Panc1 (cell line): ENCODE measurements at regions of chr18 and their contacts with region 1.

Region 1: DNA sequence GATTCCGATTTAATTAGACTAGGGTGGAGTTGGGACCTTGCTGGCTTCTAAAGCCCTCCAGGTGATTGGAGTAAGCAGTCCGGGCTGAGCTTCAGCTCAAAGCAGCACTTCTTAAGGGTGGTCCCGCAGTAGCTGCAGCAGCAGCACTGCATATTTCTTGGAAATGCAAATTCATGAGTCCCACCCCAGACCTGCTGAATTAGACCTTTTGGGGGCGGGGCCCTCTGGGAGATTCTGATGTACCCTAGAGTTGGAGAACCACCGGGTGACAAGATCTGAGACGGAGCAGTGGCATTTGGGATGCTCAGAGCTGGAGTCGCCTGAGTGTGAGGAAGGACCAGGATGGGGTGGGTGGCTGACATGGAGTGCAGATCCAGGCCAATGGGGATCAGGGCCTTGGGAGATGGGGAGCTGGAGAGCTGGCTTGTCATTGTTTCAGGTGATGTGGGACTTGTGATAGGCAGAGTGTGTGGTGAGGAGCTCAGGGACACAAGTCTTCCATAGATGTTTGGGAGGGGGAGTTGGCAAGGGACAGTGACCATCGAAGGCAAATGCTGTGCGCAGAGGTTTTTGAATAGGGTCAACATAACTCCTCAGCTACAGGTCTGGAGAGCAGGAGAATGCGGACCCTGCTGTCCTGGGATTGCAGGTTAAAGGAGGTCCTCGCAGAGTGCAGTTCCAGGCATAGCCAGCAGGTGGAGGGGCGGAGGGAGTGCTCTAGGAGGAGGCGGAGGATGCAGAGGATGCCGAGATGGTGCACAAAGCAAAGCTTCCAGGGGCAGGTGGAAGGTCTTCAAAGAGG is 130.9 kb upstream of the RAB12 start:
- DNase-seq: peak; percentile 35
- ATAC-seq: peak; percentile 85
- H3K4me3 ChIP-seq: no peak overlapping the region
- H3K27ac ChIP-seq: no peak overlapping the region
- H3K4me1 ChIP-seq: no peaks in the 10 kb centered on the region
- H3K27me3 ChIP-seq: peaks cover 15% of the 10 kb centered on the region
- CTCF ChIP-seq: peak; percentile 87

Region 2: GRCh38 chr18:8375249-8375648 is 103.1 kb before region 1 on chr18:
- CTCF ChIA-PET with region 1: no interaction called
- POLR2A ChIA-PET with region 1: no interaction called
- in situ Hi-C with region 1: no loop called
- intact Hi-C with region 1: loop called (anchors 10 kb)
- DNase-seq: no peak
- ATAC-seq: no peak
- H3K4me3 ChIP-seq: no peak overlapping the region
- H3K27ac ChIP-seq: no peak overlapping the region
- H3K4me1 ChIP-seq: no peaks in the 10 kb centered on the region
- H3K27me3 ChIP-seq: peaks cover 5% of the 10 kb centered on the region
- CTCF ChIP-seq: no peak

Region 3: DNA sequence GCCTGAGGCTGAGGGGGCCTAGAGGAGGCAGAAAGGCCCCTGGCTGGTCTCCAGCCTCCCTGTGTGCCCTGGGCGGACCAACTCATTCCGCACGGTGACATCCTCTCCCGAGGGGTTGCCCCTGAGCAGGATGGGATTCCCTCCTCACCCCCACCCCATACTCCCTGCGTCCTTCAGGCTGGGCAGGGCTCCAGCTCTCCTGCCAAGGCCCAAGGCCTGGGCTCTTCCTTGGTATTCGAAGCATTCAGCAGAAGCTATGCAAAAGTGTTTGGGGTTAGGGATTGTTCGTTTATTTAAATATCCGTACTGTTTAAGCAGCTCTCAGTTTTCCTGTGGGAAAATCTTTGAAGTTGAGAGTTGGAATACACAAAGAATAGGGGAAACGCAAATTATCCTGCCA is 17.8 kb after region 1 on chr18:
- CTCF ChIA-PET with region 1: no interaction called
- POLR2A ChIA-PET with region 1: interaction called, 15 read pairs
- in situ Hi-C with region 1: no loop called
- intact Hi-C with region 1: no loop called
- DNase-seq: no peak
- ATAC-seq: no peak
- H3K4me3 ChIP-seq: no peak overlapping the region
- H3K27ac ChIP-seq: no peak overlapping the region
- H3K4me1 ChIP-seq: no peaks in the 10 kb centered on the region
- H3K27me3 ChIP-seq: peaks cover 2% of the 10 kb centered on the region; the same call in 1 of the 2 replicates
- CTCF ChIP-seq: no peak

Region 4: DNA sequence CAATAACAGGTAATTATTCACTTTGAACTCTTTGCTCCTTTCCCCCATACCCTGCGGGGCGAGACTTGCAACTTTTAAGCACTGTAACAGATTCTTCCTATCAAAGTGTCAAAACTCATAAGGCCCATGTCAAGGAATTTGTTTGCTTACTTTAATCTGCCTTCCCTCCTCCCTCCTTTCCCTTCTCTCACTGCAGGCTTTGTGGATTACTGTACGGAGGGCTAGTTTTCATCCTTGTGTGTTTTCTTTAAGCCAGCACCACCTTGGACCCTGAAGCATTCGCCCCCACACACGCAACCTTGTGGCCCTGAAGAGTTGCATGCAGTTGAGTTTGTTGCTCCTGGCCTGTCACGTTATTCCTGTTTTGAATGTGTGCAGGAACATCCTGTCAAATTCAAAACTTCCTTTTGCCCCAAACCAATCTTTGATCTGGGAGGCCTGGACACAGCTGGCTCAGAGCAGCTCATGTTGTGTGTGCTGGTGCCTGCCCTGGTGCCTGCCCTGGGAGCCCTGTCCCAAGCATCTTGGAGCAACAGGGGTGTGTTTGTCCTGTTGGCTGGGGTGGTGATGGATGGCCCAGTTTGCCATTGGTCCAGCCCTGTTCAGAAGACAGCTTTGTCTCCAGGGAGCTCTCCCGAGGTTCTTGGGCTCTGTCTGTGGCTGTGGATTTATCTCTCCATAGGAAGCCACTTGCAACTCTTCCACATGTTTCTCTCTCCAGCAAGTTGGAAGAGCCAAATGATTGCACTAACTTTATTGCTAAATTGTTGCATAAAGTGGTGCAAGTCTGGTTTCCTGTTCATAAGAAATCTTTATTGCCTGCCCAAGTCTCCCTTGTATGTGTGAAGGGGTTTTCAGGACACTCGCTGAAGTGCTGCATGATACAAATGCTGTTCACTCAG is 1635.0 kb after region 1 on chr18:
- CTCF ChIA-PET with region 1: no interaction called
- POLR2A ChIA-PET with region 1: no interaction called
- in situ Hi-C with region 1: no loop called
- intact Hi-C with region 1: no loop called
- DNase-seq: no peak
- ATAC-seq: no peak
- H3K4me3 ChIP-seq: no peak overlapping the region
- H3K27ac ChIP-seq: no peak overlapping the region
- H3K4me1 ChIP-seq: no peaks in the 10 kb centered on the region
- H3K27me3 ChIP-seq: peaks cover 4% of the 10 kb centered on the region
- CTCF ChIP-seq: no peak